Posterior cingulate gyrus (tissue), 11 donors: ENCODE measurements at regions of chr20 and their contacts with region 1.

Region 1: GRCh38 chr20:37534401-37535157 is 6.9 kb upstream of the BLCAP start:
- DNase-seq: peak in 2 of 10 donors; percentile 38 to 43

Region 2: DNA sequence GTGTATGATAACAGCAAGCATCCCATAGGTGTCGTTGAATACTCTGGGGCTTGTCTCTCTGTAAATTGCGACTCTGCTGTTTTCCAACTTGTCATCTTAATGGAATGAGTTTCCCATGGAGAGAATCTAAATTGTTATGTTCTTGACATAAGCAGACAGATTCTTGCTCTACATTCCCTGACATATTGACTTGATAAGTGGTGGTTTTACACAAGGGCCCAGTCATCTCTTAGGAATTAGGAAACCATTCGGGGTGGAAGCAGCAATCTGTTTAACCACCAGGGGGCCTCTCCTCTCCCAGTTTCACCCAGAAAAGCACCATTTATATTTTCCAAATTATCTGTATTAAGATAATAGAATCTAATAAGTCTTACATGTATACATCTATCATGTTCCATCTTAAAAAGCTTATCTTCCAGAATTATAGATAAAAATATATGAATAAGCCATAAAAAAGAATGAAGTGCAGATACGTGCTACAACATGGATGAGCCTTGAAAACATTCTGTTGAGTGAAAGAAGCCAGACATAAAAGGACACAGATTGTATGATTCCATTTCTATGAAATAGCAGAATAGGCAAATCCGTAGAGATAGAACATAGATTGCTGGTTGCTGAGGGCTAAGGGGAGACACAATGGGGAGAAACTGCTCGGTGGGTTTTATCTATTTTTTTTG is 332.2 kb before region 1 on chr20:
- intact Hi-C with region 1: loop called (anchors 2 kb)
- DNase-seq: peak in 3 of 10 donors; percentile 26 to 31 (median 26)

Region 3: GRCh38 chr20:37270576-37271420 is 263.8 kb before region 1 on chr20:
- intact Hi-C with region 1: loop called (anchors 1 kb)
- DNase-seq: no peak

Region 4: DNA sequence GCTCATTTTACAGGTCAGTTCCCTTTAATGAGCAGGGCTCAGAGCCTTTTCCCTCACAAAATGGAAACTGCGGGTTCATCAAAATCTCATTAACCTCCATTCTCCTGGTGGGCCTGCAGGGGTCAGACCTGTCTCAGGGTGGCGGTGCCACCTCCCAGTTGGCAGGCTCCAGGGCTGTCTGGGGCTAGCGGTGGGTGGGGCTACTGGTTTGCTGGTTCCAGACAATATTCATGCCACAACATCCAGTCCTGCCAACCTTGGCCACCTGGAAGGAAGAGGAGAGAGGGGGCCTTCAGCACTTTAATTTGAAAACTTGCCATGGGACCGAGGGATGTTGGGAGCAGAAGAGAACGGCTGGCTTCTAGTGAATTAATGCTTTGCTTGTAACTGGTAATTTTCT is 117.4 kb after region 1 on chr20:
- intact Hi-C with region 1: no loop called
- DNase-seq: peak in 2 of 10 donors; percentile 15 to 79